K562 (cell line): ENCODE measurements at regions of chr16 and their contacts with region 1.

Region 1: GRCh38 chr16:21300309-21301167 is 22.4 kb upstream of the CRYM start:
- DNase-seq: peak; percentile 91 to 98 (median 92)
- ATAC-seq: peak; percentile 92
- H3K4me3 ChIP-seq: peak overlapping the region; percentile 60
- H3K27ac ChIP-seq: peak overlapping the region; percentile 43; the same call in 2 of the 3 replicates
- H3K4me1 ChIP-seq: peaks cover 13% of the 10 kb centered on the region in 2 experiments; a peak in 4 of 5 replicates
- H3K27me3 ChIP-seq: no peaks in the 10 kb centered on the region
- CTCF ChIP-seq: peak; percentile 89 to 99 (median 95)
- EP300 ChIP-seq: peak; percentile 63
- POLR2A ChIP-seq: peak; percentile 65; the same call in 1 of the 2 replicates
- RAD21 ChIP-seq: peak; percentile 97

Region 2: GRCh38 chr16:21075252-21075651 is 225.3 kb before region 1 on chr16:
- CTCF ChIA-PET with region 1: no interaction called
- POLR2A ChIA-PET with region 1: no interaction called
- in situ Hi-C with region 1: no loop called
- intact Hi-C with region 1: no loop called
- DNase-seq: no peak
- ATAC-seq: no peak
- H3K4me3 ChIP-seq: no peak overlapping the region
- H3K27ac ChIP-seq: no peak overlapping the region
- H3K4me1 ChIP-seq: no peaks in the 10 kb centered on the region
- H3K27me3 ChIP-seq: peaks cover 6 to 11% of the 10 kb centered on the region in 2 experiments; a peak in 4 of 5 replicates
- CTCF ChIP-seq: no peak
- EP300 ChIP-seq: no peak
- POLR2A ChIP-seq: no peak
- RAD21 ChIP-seq: no peak

Region 3: GRCh38 chr16:21158208-21159110 is 142.1 kb before region 1 on chr16 and contains the start of gene LDAF1:
- CTCF ChIA-PET with region 1: interaction called, 12 read pairs
- POLR2A ChIA-PET with region 1: interaction called, 5 read pairs
- in situ Hi-C with region 1: no loop called
- intact Hi-C with region 1: loop called (anchors 1 kb)
- DNase-seq: peak; percentile 90 to 92 (median 92)
- ATAC-seq: peak; percentile 99
- H3K4me3 ChIP-seq: peak within 1 kb of the TSS; percentile 70
- H3K27ac ChIP-seq: peak within 1 kb of the TSS; percentile 58; the same call in 2 of the 3 replicates
- H3K4me1 ChIP-seq: peaks cover 10 to 17% of the 10 kb centered on the region in 2 experiments
- H3K27me3 ChIP-seq: no peaks in the 10 kb centered on the region
- CTCF ChIP-seq: no peak; a peak in 1 of 6 replicates
- EP300 ChIP-seq: no peak
- POLR2A ChIP-seq: peak; percentile 77
- RAD21 ChIP-seq: no peak
- polyA plus RNA-seq, gene LDAF1: 13.7 to 20.1 TPM

Region 4: DNA sequence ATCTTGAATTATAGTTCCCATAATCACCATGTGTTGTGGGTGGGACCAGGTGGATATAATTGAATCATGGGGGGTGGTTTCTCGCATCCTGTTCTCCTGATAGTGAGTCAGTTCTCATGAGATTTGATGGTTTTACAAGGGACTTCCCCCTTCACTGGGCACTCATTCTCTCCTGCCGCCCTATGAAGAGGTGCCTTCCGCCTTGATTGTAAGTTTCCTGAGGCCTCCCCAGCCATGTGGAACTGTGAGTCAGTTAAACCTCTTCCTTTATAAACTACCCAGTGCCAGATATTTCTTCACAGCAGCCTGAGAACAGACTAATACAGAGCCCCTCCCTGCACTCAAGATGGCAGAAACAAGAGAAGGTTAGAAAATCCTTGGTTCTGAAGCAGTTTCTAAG is 115.7 kb before region 1 on chr16:
- CTCF ChIA-PET with region 1: interaction called, 22 read pairs
- POLR2A ChIA-PET with region 1: interaction called, 5 read pairs
- in situ Hi-C with region 1: loop called (anchors 5 kb)
- intact Hi-C with region 1: loop called (anchors 1 kb)
- DNase-seq: no peak
- ATAC-seq: no peak
- H3K4me3 ChIP-seq: no peak overlapping the region
- H3K27ac ChIP-seq: no peak overlapping the region
- H3K4me1 ChIP-seq: peaks cover 5 to 8% of the 10 kb centered on the region in 2 experiments; a peak in 3 of 5 replicates
- H3K27me3 ChIP-seq: no peaks in the 10 kb centered on the region
- CTCF ChIP-seq: no peak
- EP300 ChIP-seq: no peak
- POLR2A ChIP-seq: no peak
- RAD21 ChIP-seq: no peak

Region 5: DNA sequence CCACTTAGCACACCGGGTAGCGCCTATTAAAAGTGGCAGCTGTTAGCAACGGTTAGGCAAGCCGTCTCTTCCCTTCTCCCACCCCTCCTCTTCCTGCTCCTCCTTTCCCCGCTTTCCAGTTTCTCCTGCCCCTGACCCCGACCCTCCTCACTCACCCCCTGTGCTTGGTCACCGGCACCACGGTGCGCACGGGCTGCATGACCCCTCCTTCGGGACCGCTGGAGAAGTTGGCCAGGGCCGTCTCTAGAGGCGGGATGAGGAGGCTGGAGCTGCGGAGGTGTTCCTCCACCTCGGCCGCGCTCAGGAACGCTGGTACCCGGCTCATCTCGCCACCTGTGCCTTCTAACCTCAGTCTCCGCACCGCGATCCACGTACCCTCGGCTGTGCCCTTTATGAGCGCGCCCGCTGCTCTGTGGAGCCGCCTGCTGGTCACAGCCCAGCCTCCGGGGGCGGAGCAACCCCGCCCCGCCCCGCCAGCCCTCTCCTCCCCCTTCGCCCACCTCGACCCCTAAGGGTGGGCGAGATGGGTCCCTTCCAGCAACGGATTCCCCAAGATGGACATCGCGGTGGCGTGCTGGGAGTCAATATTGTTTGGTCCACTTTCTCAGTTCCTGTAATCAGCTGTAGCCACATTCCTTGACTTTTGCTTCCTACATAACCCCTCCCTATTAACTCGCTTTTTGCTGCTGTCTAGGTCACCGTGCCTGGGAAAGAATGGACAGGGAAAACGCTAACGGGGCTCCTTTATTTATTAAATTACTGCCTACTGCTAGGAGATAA is 22.4 kb before region 1 on chr16 and contains the start of gene CRYM:
- CTCF ChIA-PET with region 1: no interaction called
- POLR2A ChIA-PET with region 1: interaction called, 3 read pairs
- in situ Hi-C with region 1: no loop called
- intact Hi-C with region 1: loop called (anchors 1 kb)
- DNase-seq: peak; percentile 66 to 86 (median 86)
- ATAC-seq: peak; percentile 99
- H3K4me3 ChIP-seq: peak within 1 kb of the TSS; percentile 36
- H3K27ac ChIP-seq: no peak within 1 kb of the TSS; the same call in 2 of the 3 replicates
- H3K4me1 ChIP-seq: peaks cover 5 to 15% of the 10 kb centered on the region in 2 experiments; a peak in 3 of 5 replicates
- H3K27me3 ChIP-seq: peaks cover 19 to 35% of the 10 kb centered on the region in 2 experiments
- CTCF ChIP-seq: peak; percentile 69 to 84 (median 78)
- EP300 ChIP-seq: no peak
- POLR2A ChIP-seq: no peak
- RAD21 ChIP-seq: peak; percentile 43 to 66
- polyA plus RNA-seq, gene CRYM: 0.08 to 0.15 TPM

Region 6: GRCh38 chr16:21314339-21314738 is 13.8 kb after region 1 on chr16:
- CTCF ChIA-PET with region 1: no interaction called
- POLR2A ChIA-PET with region 1: no interaction called
- in situ Hi-C with region 1: no loop called
- intact Hi-C with region 1: no loop called
- DNase-seq: no peak
- ATAC-seq: no peak
- H3K4me3 ChIP-seq: no peak overlapping the region
- H3K27ac ChIP-seq: no peak overlapping the region
- H3K4me1 ChIP-seq: no peaks in the 10 kb centered on the region
- H3K27me3 ChIP-seq: no peaks in the 10 kb centered on the region
- CTCF ChIP-seq: no peak
- EP300 ChIP-seq: no peak
- POLR2A ChIP-seq: no peak
- RAD21 ChIP-seq: no peak

Region 7: DNA sequence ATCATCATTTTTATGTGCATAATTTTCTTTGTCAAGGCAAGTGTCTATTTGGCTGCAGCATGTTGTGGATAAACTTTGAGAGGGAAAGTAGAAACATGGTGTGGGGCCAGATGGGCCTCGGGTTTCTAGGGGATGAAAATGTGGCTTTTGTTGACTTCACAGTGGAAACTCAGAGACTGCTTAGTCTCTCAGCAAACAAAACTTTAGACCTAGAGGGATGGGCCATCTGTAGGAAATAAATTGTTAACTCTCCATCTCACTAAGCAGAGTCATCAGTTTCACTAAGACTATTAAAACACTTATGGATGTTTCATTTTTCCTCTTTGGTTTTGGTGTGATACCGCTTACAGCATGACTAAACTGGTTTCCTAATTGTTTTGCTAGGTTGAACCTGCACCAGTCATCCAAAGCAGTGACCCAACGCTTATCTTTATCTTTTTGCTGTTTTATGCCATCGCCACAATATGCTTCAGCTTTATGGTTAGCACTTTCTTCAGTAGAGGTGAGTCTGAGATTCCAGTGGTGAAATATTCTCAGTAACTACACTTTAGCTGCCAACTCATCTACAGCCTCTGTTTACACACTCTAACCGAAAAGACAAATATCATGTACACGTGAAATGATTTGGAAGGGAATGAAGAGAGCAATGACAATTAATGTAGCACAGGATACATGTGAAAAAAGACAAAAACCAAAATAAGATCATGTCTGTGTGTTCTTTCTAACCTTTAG is 38.2 kb after region 1 on chr16:
- CTCF ChIA-PET with region 1: no interaction called
- POLR2A ChIA-PET with region 1: no interaction called
- in situ Hi-C with region 1: no loop called
- intact Hi-C with region 1: no loop called
- DNase-seq: no peak
- ATAC-seq: no peak
- H3K4me3 ChIP-seq: no peak overlapping the region
- H3K27ac ChIP-seq: no peak overlapping the region
- H3K4me1 ChIP-seq: no peaks in the 10 kb centered on the region; a peak in 1 of 5 replicates
- H3K27me3 ChIP-seq: peaks cover 0 to 7% of the 10 kb centered on the region in 2 experiments; a peak in 4 of 5 replicates
- CTCF ChIP-seq: no peak
- EP300 ChIP-seq: no peak
- POLR2A ChIP-seq: no peak
- RAD21 ChIP-seq: no peak

Region 8: DNA sequence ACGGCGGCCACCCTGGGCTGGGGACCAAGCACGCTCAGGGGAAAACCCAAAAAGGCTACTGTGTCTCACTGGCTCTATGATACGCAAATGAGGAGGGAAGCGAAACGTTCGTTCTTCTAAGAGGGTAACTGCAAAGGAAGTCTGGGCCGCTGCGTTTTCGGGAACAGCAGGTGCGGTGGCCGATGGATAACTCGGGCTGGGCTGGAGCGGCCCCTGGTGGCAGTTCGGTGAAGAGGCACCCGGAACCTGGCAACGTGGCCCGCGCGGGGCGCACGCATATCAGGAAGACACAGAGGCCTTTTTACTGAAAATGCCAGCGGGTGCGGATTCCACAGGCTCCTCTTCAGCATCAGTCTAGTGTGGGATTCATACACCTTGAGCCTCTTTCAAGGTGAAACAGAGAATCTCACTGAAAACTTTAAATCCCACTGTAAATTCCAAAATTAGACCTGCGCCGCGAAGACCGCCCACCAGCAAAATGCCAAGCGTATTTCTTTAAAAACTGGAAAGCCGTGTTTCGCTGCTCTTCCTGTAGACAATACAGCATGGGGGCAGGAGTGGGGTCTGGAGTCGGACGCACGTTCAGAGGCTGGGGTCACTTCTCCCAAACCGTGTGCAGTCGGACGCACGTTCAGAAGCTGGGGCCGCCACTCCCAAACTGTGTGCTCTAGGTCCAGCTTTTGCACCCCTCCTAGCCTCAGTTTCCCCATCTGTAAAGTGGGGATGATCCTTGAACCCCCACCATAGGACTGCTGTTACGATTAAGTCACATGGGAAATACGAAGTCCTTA is 254.5 kb after region 1 on chr16:
- CTCF ChIA-PET with region 1: no interaction called
- POLR2A ChIA-PET with region 1: interaction called, 3 read pairs
- in situ Hi-C with region 1: loop called (anchors 25 kb)
- intact Hi-C with region 1: loop called (anchors 5 kb)
- DNase-seq: peak; percentile 89 to 93 (median 92)
- ATAC-seq: peak; percentile 91
- H3K4me3 ChIP-seq: no peak overlapping the region
- H3K27ac ChIP-seq: 0 out of 3 replicates have a peak overlapping the region, but pooled peaks have one; percentile 16
- H3K4me1 ChIP-seq: peaks cover 0 to 26% of the 10 kb centered on the region in 2 experiments; a peak in 4 of 5 replicates
- H3K27me3 ChIP-seq: peaks cover 3 to 14% of the 10 kb centered on the region in 2 experiments; a peak in 1 of 5 replicates
- CTCF ChIP-seq: peak; percentile 97 to 98 (median 98)
- EP300 ChIP-seq: no peak
- POLR2A ChIP-seq: no peak
- RAD21 ChIP-seq: peak; percentile 99 to 100